PC-9 (cell line): ENCODE measurements at regions of chr1 and their contacts with region 1.

Region 1: GRCh38 chr1:110338886-110339406 is at the start of gene RBM15:
- DNase-seq: peak; percentile 97 to 100
- H3K4me3 ChIP-seq: peak within 1 kb of the TSS; percentile 77
- H3K27ac ChIP-seq: peak within 1 kb of the TSS; percentile 88
- H3K4me1 ChIP-seq: peaks cover 64% of the 10 kb centered on the region
- H3K27me3 ChIP-seq: no peaks in the 10 kb centered on the region
- CTCF ChIP-seq: no peak
- total RNA-seq, gene RBM15: 42.7 and 43.1 TPM in 2 replicates

Region 2: GRCh38 chr1:110003747-110004630 is 335.0 kb before region 1 on chr1:
- CTCF ChIA-PET with region 1: interaction called, 13 read pairs
- POLR2A ChIA-PET with region 1: no interaction called
- intact Hi-C with region 1: no loop called
- DNase-seq: peak; percentile 82 to 100
- H3K4me3 ChIP-seq: peak overlapping the region; percentile 60
- H3K27ac ChIP-seq: peak overlapping the region; percentile 95
- H3K4me1 ChIP-seq: peaks cover 76% of the 10 kb centered on the region
- H3K27me3 ChIP-seq: no peaks in the 10 kb centered on the region
- CTCF ChIP-seq: no peak

Region 3: DNA sequence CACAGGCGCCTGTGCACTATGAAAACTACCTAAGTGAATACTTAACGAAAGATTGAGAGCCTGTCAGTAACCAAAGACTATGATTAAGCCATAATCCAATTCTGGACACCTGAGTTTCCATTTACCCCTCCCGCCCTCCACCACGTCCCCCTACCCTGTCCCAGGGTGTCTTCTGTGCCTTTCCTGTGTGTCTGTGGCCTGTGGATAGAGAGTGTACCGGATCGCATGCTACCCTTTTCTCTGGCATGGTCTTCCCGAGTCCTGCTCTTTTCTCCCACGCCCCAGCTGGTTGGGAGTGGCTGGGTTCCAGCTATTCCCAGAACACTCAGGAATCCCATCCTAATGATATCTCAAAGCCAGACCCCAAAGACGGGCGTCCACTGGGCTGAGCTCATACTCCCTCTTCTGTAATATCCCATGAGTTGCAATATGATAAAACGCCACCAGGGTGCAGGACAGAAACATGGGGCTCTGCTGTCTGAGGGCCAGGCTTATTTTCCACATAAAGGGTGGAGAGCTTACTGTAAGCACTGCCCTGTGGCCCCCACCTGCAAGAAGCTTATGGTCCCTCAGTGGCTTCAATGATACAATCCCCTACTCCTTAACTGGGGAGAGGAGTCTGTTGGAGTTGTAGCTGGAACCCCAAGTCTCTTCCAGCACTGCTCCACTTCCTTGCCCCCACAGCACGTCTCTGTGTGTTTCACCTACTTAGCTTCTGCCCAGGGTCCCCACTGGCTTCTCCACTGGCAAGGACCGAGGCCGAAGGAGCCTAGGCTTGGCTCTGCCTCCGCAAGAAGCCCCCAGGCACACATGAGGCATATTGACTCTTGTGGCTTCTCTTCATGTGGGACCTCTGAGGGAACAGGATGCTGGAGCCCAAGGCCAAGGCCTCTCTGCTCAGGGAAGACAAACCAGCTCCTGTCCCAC is 250.9 kb before region 1 on chr1:
- CTCF ChIA-PET with region 1: no interaction called
- POLR2A ChIA-PET with region 1: no interaction called
- intact Hi-C with region 1: loop called (anchors 10 kb)
- DNase-seq: peak; percentile 47 to 60
- H3K4me3 ChIP-seq: no peak overlapping the region
- H3K27ac ChIP-seq: peak overlapping the region; percentile 65
- H3K4me1 ChIP-seq: peaks cover 76% of the 10 kb centered on the region
- H3K27me3 ChIP-seq: no peaks in the 10 kb centered on the region
- CTCF ChIP-seq: peak; percentile 95

Region 4: GRCh38 chr1:110383251-110383990 is 44.5 kb after region 1 on chr1:
- CTCF ChIA-PET with region 1: interaction called, 3 read pairs
- POLR2A ChIA-PET with region 1: no interaction called
- intact Hi-C with region 1: loop called (anchors 2 kb)
- DNase-seq: peak; percentile 78 to 99
- H3K4me3 ChIP-seq: peak overlapping the region; percentile 49
- H3K27ac ChIP-seq: peak overlapping the region; percentile 79
- H3K4me1 ChIP-seq: peaks cover 47% of the 10 kb centered on the region
- H3K27me3 ChIP-seq: no peaks in the 10 kb centered on the region
- CTCF ChIP-seq: no peak

Region 5: GRCh38 chr1:110407260-110408210 is 68.6 kb after region 1 on chr1 and contains the start of gene LAMTOR5:
- CTCF ChIA-PET with region 1: interaction called, 3 read pairs
- POLR2A ChIA-PET with region 1: no interaction called
- intact Hi-C with region 1: loop called (anchors 1 kb)
- DNase-seq: peak; percentile 93
- H3K4me3 ChIP-seq: peak within 1 kb of the TSS; percentile 84
- H3K27ac ChIP-seq: peak within 1 kb of the TSS; percentile 60
- H3K4me1 ChIP-seq: peaks cover 22% of the 10 kb centered on the region
- H3K27me3 ChIP-seq: no peaks in the 10 kb centered on the region
- CTCF ChIP-seq: peak; percentile 40; the same call in 1 of the 2 replicates
- total RNA-seq, gene LAMTOR5: 140 and 160 TPM in 2 replicates

Region 6: GRCh38 chr1:111192658-111193519 is 853.9 kb after region 1 on chr1:
- CTCF ChIA-PET with region 1: no interaction called
- POLR2A ChIA-PET with region 1: no interaction called
- intact Hi-C with region 1: no loop called
- DNase-seq: peak in 1 of 2 experiments; percentile 39
- H3K4me3 ChIP-seq: no peak overlapping the region; the same call in 1 of the 2 replicates
- H3K27ac ChIP-seq: peak overlapping the region; percentile 79
- H3K4me1 ChIP-seq: peaks cover 48% of the 10 kb centered on the region
- H3K27me3 ChIP-seq: no peaks in the 10 kb centered on the region
- CTCF ChIP-seq: no peak